ENCODE measurements at regions of chr1 and their contacts with region 1.

Region 1: GRCh38 chr1:154558575-154559465 is at the start of gene UBE2Q1:
- DNase-seq: peak; percentile 94
- H3K4me3 ChIP-seq: peak within 1 kb of the TSS; percentile 79
- CTCF ChIP-seq: no peak

Region 2: GRCh38 chr1:154431586-154432373 is 127.0 kb before region 1 on chr1:
- CTCF ChIA-PET with region 1: no interaction called
- POLR2A ChIA-PET with region 1: no interaction called
- DNase-seq: peak; percentile 90
- H3K4me3 ChIP-seq: no peak overlapping the region
- CTCF ChIP-seq: no peak

Region 3: DNA sequence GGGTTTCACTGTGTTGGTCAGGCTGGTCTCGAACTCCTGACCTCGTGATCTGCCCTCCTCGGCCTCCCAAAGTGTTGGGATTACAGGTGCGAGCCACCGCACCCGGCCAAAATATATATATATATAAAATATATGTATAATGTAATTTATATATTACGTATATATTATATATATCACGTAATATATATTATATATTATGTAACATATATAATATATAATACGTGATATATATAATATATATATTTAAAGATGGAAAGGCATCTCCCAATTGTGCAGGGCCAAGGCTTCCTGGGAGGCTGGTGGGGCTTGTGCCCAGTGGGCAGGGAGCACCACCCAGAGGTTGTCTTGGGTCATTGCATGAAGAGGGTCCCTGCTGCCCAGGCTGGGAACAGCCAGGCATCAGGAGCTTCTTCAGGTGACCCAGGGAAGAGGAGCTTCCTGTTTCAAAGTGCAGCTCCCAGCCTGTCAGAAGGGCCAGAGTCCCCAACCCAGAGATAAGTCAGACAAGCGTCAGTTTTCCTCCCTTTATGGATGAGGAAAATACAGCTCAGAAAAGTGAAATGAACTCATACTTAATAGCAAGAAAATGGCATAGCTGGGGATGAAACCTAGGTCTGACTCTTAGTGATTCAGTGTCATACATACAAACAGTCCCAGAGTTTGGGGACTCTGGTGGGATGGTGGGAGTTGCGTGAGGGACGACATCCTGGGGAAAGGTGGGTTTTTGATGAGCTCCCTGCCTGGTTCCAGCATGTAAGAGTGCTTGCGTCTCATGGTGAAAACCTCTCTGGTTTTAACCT is 12.4 kb before region 1 on chr1:
- CTCF ChIA-PET with region 1: interaction called, 26 read pairs
- POLR2A ChIA-PET with region 1: no interaction called
- DNase-seq: no peak
- H3K4me3 ChIP-seq: no peak overlapping the region
- CTCF ChIP-seq: peak; percentile 85

Region 4: DNA sequence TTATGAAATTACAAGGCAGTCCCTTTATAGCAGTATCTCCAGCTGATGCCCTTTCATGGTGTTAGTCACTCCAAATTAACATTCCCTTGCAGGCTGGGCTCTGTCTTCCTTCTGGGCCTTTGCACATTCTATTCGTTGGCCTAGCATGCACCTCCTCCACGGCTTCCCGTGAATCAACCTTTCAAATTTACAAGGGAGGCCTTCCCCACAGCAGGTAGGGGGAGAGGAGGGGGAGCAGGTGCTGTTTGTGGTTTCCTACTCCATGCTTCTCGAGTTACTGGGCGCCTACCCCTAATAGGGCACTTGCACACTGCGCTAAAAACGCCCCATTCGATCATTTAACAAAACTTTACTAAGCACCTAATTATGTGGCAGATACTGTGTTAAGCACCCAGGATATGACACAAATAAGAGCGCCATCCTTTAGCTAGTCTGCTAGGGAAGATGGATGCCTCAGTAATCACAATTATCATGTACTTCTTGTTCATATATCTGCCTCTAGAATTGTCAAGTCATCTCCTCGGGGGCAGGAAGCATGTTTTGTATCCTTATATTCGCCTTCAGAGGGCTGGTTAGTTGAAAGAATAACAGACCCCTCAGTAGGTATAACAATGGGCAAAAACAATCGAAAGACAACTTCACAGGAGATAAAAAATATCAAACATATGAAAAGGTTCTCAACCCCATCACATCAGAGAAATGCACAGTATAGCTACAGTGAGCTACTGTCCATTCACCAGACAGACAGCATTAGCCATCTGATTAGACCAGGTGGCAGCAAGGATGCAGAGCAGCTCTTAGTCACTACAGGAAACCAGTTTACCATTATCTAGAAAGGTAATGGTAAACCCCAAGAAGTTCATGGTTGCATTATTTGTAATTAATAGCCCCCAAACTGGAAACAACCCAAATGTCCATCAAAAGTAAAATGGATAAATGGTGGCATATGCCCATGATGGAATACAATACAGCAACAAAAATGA is 50.9 kb after region 1 on chr1:
- CTCF ChIA-PET with region 1: interaction called, 13 read pairs
- POLR2A ChIA-PET with region 1: no interaction called
- DNase-seq: no peak
- H3K4me3 ChIP-seq: no peak overlapping the region
- CTCF ChIP-seq: no peak

Region 5: GRCh38 chr1:154870115-154870571 is 311.3 kb after region 1 on chr1 and contains the start of gene KCNN3:
- CTCF ChIA-PET with region 1: interaction called, 16 read pairs
- POLR2A ChIA-PET with region 1: no interaction called
- DNase-seq: no peak
- H3K4me3 ChIP-seq: peak within 1 kb of the TSS; percentile 36
- CTCF ChIP-seq: no peak

Region 6: DNA sequence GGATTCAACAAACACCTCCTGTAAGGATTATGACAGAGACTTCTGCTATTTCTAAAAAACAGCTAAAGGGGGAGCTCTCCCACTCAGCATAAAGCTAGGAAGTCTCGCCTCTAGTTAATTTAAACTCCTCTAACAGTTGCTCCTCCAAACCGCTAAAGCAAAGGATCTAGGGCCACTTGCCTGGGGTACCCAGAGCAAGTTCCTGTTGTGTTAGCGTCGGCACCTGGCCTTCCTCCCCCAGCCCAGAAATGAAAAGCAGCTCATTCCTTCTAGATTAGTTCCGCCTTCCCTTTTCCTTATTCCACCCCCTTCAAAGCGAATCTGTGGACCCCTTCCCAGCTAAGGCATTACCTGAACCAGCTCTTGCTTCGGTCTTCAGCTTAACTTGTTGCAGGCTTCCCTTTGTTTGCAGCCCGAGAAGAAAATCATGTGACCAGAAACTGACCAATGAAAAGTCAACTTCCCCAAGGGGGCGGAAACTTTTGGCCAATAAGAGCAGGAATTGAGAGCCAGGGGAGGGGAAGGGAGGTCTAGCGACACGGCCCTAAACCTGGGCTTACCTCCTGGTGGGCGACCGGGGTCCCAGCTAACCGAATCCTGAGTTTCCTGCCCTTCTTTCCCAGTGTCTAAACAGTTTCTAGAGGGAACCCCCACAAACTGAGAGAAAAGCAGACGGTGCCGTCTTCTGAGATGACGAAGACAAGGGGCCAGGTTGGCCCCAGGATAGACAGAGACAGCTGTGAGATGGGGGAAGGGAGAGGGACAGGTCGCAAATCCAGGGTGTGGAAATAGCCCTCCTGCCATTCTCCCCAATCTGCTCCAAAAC is 397.1 kb after region 1 on chr1 and contains the start of gene PBXIP1:
- CTCF ChIA-PET with region 1: interaction called, 12 read pairs
- POLR2A ChIA-PET with region 1: interaction called, 3 read pairs
- DNase-seq: peak; percentile 50
- H3K4me3 ChIP-seq: peak within 1 kb of the TSS; percentile 66
- CTCF ChIP-seq: peak; percentile 31

Measured in AG04449 (cell line).